ENCODE measurements at regions of chr22 and their contacts with region 1.

Region 1: GRCh38 chr22:24555157-24556039 is at the start of gene SNRPD3:
- H3K4me3 ChIP-seq: peak within 1 kb of the TSS; percentile 93
- H3K27ac ChIP-seq: peak within 1 kb of the TSS; percentile 96
- H3K4me1 ChIP-seq: peaks cover 8% of the 10 kb centered on the region
- CTCF ChIP-seq: 0 out of 2 replicates have a peak, but pooled peaks have one; percentile 21

Region 2: DNA sequence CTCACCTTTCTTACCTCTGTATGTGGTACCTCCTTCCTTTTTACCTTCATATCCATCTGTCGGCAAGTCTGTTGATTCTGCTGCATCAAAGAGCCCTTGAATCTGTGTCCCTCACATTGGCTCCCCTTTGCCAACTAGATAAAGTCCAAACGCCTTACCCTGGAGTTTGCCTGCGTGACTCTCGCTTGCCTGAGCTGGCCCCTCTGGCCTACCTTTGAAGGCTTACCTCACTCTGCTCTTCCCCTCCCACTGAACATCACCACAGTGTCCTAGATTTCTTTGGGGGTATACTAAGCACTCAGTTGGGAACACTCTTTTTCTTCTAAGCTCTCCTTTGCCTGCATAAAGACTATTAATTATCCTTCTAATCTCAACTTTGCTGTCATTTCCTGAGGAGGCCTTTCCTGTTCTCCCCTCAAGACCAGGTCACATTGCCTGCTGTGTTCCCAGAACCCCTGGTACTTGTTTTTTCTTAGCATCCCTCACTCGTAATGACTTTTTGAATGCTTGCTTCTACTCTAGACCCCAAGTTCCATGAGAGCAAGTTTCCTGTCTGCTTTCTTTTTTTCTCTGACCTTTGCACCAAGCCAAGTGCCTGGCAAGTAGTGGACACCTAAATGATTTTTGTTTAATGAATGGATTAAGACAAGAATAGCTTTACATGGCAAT is 195.8 kb before region 1 on chr22:
- CTCF ChIA-PET with region 1: no interaction called
- POLR2A ChIA-PET with region 1: no interaction called
- H3K4me3 ChIP-seq: no peak overlapping the region
- H3K27ac ChIP-seq: no peak overlapping the region
- H3K4me1 ChIP-seq: peaks cover 24% of the 10 kb centered on the region
- CTCF ChIP-seq: no peak

Region 3: DNA sequence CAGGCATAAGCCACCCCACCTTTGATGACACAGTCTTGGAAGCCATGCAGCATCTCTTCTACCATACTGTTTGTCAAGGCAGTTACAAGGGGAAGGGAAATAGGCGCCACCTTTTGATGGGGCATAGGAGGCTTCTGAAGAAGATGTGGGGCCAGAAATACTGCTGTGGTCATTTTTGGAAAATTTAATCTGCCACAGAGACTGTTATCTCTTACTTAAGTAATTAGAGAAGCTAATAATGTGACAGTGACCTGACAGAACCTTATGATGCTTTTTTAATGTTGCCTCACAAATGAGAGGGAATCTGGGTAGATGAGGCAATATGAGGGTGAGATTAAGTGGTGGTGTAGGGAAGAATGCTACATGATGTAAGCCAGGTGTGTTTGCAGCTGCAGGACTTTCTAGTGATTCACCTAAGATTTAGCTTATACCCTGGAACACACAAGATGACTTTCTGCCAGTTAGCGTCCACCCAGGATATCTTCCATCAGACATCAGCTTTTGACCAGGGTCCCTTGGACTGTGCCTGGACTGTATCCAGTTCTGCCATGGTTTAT is 162.3 kb before region 1 on chr22:
- CTCF ChIA-PET with region 1: no interaction called
- POLR2A ChIA-PET with region 1: no interaction called
- H3K4me3 ChIP-seq: no peak overlapping the region
- H3K27ac ChIP-seq: no peak overlapping the region
- H3K4me1 ChIP-seq: peaks cover 20% of the 10 kb centered on the region
- CTCF ChIP-seq: no peak

Region 4: DNA sequence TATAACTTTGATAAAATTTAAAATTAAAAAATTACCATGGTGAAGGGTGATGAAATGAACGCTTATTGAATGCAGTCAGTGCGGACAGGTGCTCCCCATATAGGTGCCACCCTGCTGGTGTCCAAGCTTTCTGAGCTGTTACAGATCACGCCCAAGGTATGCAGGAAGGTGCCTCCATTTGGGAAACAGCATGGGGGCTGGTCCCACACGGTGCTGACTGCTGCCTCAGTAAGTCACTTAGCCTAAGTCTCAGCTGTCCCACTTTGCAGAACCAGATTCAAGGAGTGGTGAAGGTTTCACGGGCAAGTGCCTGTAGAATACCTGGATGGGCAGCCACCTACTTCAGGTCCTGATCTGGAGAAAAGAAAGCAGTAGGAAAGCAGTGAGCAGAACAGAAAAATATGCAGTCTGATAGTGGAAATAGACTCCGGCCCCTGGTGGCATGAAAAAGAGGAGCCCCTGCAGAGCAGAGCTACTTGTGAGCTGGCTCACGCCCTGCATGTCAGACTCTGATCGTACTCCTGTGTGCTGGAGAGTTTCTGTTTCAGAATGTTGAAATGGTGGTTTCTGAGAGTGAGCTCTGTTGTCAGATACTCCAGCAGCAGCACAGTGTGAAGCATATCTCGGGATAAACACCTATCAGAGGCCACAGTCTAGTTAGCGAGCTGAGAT is 94.8 kb before region 1 on chr22:
- CTCF ChIA-PET with region 1: no interaction called
- POLR2A ChIA-PET with region 1: no interaction called
- H3K4me3 ChIP-seq: no peak overlapping the region
- H3K27ac ChIP-seq: no peak overlapping the region
- H3K4me1 ChIP-seq: peaks cover 3% of the 10 kb centered on the region; the same call in 1 of the 2 replicates
- CTCF ChIP-seq: no peak; the same call in 1 of the 2 replicates

Region 5: DNA sequence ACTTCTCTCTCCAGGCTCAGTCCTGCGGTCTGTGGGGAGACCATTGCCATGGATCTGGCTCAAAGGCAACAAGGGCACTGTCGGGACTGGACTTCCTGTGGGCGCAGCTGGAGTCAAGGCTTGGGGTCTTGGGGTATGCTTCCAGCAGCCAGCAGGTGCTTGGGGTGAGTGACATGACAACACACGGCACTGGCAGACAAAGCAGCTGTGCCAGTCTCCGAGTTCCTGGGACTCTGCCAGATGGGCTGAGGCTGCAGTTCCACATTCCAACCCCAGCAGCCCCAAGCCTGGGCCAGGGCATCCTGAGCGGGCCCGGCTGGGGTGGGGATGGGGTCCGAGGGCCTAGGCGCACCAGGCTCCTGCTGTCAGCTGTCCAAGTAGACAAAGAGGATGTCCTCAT is 12.8 kb before region 1 on chr22:
- CTCF ChIA-PET with region 1: interaction called, 3 read pairs
- POLR2A ChIA-PET with region 1: interaction called, 33 read pairs
- H3K4me3 ChIP-seq: no peak overlapping the region
- H3K27ac ChIP-seq: no peak overlapping the region
- H3K4me1 ChIP-seq: no peaks in the 10 kb centered on the region
- CTCF ChIP-seq: no peak

Region 6: GRCh38 chr22:24583221-24584165 is 28.1 kb after region 1 on chr22:
- CTCF ChIA-PET with region 1: interaction called, 3 read pairs
- POLR2A ChIA-PET with region 1: interaction called, 31 read pairs
- H3K4me3 ChIP-seq: no peak overlapping the region
- H3K27ac ChIP-seq: peak overlapping the region; percentile 65
- H3K4me1 ChIP-seq: peaks cover 16% of the 10 kb centered on the region
- CTCF ChIP-seq: peak; percentile 18; the same call in 1 of the 2 replicates

Region 7: GRCh38 chr22:24592851-24593558 is 37.6 kb after region 1 on chr22 and contains the start of gene LRRC75B:
- CTCF ChIA-PET with region 1: no interaction called
- POLR2A ChIA-PET with region 1: interaction called, 14 read pairs
- H3K4me3 ChIP-seq: peak within 1 kb of the TSS; percentile 55
- H3K27ac ChIP-seq: peak within 1 kb of the TSS; percentile 68
- H3K4me1 ChIP-seq: no peaks in the 10 kb centered on the region
- CTCF ChIP-seq: no peak